GM18951 (cell line): ENCODE measurements at regions of chr12 and their contacts with region 1.

Region 1: GRCh38 chr12:49288412-49288853 is 6.5 kb upstream of the PRPH start:
- POLR2A ChIP-seq: no peak

Region 2: GRCh38 chr12:48640854-48641253 is 647.6 kb before region 1 on chr12:
- in situ Hi-C with region 1: no loop called
- POLR2A ChIP-seq: no peak

Region 3: GRCh38 chr12:49342066-49342913 is 53.9 kb after region 1 on chr12:
- in situ Hi-C with region 1: loop called (anchors 5 kb)
- POLR2A ChIP-seq: no peak